Activated CD4-positive, alpha-beta memory T cell treated with anti-CD3 and anti-CD28 coated beads for 36 hours (primary cell): ENCODE measurements at regions of chr20 and their contacts with region 1.

Region 1: GRCh38 chr20:60137629-60138245 is 179.5 kb downstream of the CDH26 start:
- DNase-seq: peak; percentile 55
- H3K4me3 Mint-ChIP-seq: peak overlapping the region; percentile 60
- H3K27ac Mint-ChIP-seq: no peak overlapping the region
- H3K4me1 Mint-ChIP-seq: no peaks in the 10 kb centered on the region
- H3K27me3 Mint-ChIP-seq: no peaks in the 10 kb centered on the region

Region 2: DNA sequence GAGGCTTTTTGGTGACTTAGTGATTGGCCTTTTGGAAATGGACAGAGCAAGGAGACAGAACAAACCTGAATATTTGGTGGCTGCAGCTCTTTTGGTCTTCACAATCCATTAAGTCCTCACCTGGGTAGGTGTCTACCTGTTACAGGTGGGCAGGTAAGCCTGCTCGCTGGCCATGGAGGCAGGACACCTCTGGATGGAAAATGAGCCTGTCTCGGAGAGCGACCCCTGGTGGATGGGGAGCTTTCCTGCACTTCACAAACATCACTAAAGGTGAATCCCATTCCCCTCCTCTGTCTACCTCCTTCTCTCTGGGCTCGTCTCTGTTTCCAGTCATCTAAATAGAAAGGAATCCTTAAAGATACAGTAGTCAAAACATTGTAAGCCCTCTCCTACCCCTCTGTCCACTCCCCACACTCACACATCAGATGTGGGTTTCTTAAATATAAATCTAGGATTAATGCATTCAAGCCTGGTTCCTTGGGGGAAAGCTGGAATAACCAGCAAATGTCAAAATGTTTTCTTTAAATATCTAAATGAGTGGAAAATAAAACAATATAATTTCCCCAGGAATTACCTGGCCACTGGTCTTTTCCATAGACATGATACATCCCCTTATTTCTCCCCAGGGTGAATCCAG is 125.3 kb after region 1 on chr20:
- CTCF ChIA-PET with region 1: interaction called, 15 read pairs
- POLR2A ChIA-PET with region 1: no interaction called
- intact Hi-C with region 1: loop called (anchors 2 kb)
- DNase-seq: peak; percentile 66
- H3K4me3 Mint-ChIP-seq: no peak overlapping the region
- H3K27ac Mint-ChIP-seq: no peak overlapping the region
- H3K4me1 Mint-ChIP-seq: peaks cover 14% of the 10 kb centered on the region
- H3K27me3 Mint-ChIP-seq: no peaks in the 10 kb centered on the region